Calu3 (cell line): ENCODE measurements at regions of chr10 and their contacts with region 1.

Region 1: GRCh38 chr10:23293145-23293724 is 51.4 kb downstream of the C10orf67 start:
- DNase-seq: peak; percentile 68
- H3K4me3 Mint-ChIP-seq: no peak overlapping the region
- H3K27ac Mint-ChIP-seq: no peak overlapping the region
- H3K4me1 Mint-ChIP-seq: peaks cover 8% of the 10 kb centered on the region
- H3K27me3 Mint-ChIP-seq: no peaks in the 10 kb centered on the region
- CTCF ChIP-seq: peak; percentile 70

Region 2: DNA sequence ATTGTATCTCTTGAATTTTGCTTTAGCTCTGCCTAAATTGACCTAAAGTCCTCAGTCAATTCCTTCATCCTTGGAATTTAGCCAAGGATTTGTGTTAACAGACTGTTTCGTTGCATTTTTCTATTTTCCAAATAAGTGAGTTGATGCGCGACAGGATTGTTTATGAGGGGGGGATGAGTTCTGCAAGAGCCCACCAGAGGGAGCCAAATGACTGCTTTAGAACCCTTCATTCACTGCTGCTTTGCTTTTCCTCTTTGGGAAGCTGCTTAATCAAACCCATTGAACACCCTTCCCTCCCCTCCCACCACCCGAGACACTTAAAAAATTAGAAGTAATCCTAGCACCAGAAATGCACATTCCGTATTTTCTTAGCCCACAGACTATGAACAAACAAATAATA is 134.9 kb before region 1 on chr10:
- CTCF ChIA-PET with region 1: interaction called, 20 read pairs
- intact Hi-C with region 1: loop called (anchors 1 kb)
- DNase-seq: peak; percentile 54
- H3K4me3 Mint-ChIP-seq: no peak overlapping the region
- H3K27ac Mint-ChIP-seq: no peak overlapping the region
- H3K4me1 Mint-ChIP-seq: no peaks in the 10 kb centered on the region
- H3K27me3 Mint-ChIP-seq: peaks cover 47% of the 10 kb centered on the region
- CTCF ChIP-seq: peak; percentile 87

Region 3: GRCh38 chr10:23459344-23459939 is 166.2 kb after region 1 on chr10:
- CTCF ChIA-PET with region 1: no interaction called
- intact Hi-C with region 1: no loop called
- DNase-seq: no peak
- H3K4me3 Mint-ChIP-seq: no peak overlapping the region
- H3K27ac Mint-ChIP-seq: no peak overlapping the region
- H3K4me1 Mint-ChIP-seq: peaks cover 16% of the 10 kb centered on the region
- H3K27me3 Mint-ChIP-seq: no peaks in the 10 kb centered on the region
- CTCF ChIP-seq: no peak

Region 4: DNA sequence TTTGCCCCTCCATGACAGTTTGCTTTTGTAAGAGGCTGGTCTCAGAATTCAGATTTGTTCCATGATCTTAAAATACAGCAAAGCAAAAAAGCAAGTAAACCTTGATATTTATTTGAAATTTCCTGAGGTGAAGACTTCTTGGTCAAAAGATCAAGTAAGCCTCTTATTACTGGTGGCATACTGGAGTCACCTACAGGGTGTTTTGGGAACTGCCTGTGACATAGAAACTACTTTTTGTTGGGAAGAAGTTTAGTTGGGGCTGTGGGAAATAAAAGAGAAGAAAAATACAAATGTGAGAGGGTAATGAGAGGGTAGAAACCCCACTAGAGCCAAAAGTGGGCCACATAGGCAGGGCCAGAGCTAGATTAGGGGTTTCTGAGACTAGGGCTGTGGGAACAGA is 363.5 kb after region 1 on chr10:
- CTCF ChIA-PET with region 1: no interaction called
- intact Hi-C with region 1: loop called (anchors 5 kb)
- DNase-seq: no peak
- H3K4me3 Mint-ChIP-seq: no peak overlapping the region
- H3K27ac Mint-ChIP-seq: no peak overlapping the region
- H3K4me1 Mint-ChIP-seq: no peaks in the 10 kb centered on the region
- H3K27me3 Mint-ChIP-seq: peaks cover 73% of the 10 kb centered on the region
- CTCF ChIP-seq: peak; percentile 32